ENCODE measurements at regions of chr2 and their contacts with region 1.

Region 1: DNA sequence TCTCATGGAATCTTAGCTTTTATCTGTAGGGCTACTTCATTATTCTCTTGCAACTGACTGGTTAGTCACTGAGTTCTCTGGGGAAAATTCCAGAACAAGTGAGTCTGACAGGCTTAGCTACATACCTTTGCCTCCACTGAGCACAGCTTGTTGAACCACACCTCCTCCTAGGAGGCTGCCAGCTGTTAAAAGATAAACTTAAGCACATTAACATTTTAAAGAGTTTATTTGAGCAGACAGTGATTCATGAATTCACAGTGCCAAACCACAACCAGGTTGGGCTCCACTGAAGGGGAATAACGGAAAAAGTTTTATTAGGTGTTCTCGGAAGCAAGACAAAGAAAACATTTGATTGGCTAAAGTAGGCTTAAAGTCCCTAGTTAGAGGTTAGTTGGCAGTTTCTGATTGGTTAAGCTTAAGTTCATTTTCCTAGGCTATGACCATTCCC is 12.5 kb upstream of the SLC38A11 start:
- DNase-seq: no peak
- ATAC-seq: no peak
- H3K4me3 ChIP-seq: no peak overlapping the region
- H3K27ac ChIP-seq: no peak overlapping the region
- H3K4me1 ChIP-seq: no peaks in the 10 kb centered on the region
- H3K27me3 ChIP-seq: no peaks in the 10 kb centered on the region
- CTCF ChIP-seq: no peak

Region 2: GRCh38 chr2:164981217-164981990 is 13.6 kb after region 1 on chr2:
- CTCF ChIA-PET with region 1: no interaction called
- POLR2A ChIA-PET with region 1: no interaction called
- in situ Hi-C with region 1: no loop called
- intact Hi-C with region 1: no loop called
- DNase-seq: no peak
- ATAC-seq: peak; percentile 74
- H3K4me3 ChIP-seq: no peak overlapping the region
- H3K27ac ChIP-seq: no peak overlapping the region
- H3K4me1 ChIP-seq: no peaks in the 10 kb centered on the region; the same call in 1 of the 2 replicates
- H3K27me3 ChIP-seq: no peaks in the 10 kb centered on the region
- CTCF ChIP-seq: no peak

Region 3: GRCh38 chr2:166256896-166257295 is 1289.1 kb after region 1 on chr2:
- CTCF ChIA-PET with region 1: interaction called, 13 read pairs
- POLR2A ChIA-PET with region 1: no interaction called
- in situ Hi-C with region 1: no loop called
- intact Hi-C with region 1: no loop called
- DNase-seq: no peak
- ATAC-seq: no peak
- H3K4me3 ChIP-seq: no peak overlapping the region
- H3K27ac ChIP-seq: no peak overlapping the region
- H3K4me1 ChIP-seq: no peaks in the 10 kb centered on the region
- H3K27me3 ChIP-seq: no peaks in the 10 kb centered on the region
- CTCF ChIP-seq: no peak

Measured in Panc1 (cell line).